ENCODE measurements at regions of chr3 and their contacts with region 1.

Region 1: GRCh38 chr3:133441867-133442270 is 42.0 kb downstream of the BFSP2 start:
- DNase-seq: peak in 8 of 14 experiments; percentile 3 to 51 (median 30)
- ATAC-seq: peak; percentile 70
- H3K4me3 ChIP-seq: peak overlapping the region; percentile 43
- H3K4me3 Mint-ChIP-seq: peak overlapping the region; percentile 85
- H3K27ac ChIP-seq: peak overlapping the region; percentile 56 to 58
- H3K27ac Mint-ChIP-seq: peak overlapping the region; percentile 83
- H3K4me1 ChIP-seq: peaks cover 19% of the 10 kb centered on the region
- H3K4me1 Mint-ChIP-seq: peaks cover 36% of the 10 kb centered on the region
- H3K27me3 ChIP-seq: no peaks in the 10 kb centered on the region
- H3K27me3 Mint-ChIP-seq: no peaks in the 10 kb centered on the region
- CTCF ChIP-seq: no peak

Region 2: GRCh38 chr3:133040696-133041523 is 401.0 kb before region 1 on chr3:
- CTCF ChIA-PET with region 1: no interaction called
- POLR2A ChIA-PET with region 1: no interaction called
- intact Hi-C with region 1: no loop called
- DNase-seq: peak in 1 of 14 experiments; percentile 2
- ATAC-seq: no peak
- H3K4me3 ChIP-seq: no peak overlapping the region
- H3K4me3 Mint-ChIP-seq: no peak overlapping the region
- H3K27ac ChIP-seq: no peak overlapping the region
- H3K27ac Mint-ChIP-seq: no peak overlapping the region
- H3K4me1 ChIP-seq: peaks cover 11% of the 10 kb centered on the region
- H3K4me1 Mint-ChIP-seq: peaks cover 15% of the 10 kb centered on the region
- H3K27me3 ChIP-seq: peaks cover 32 to 45% of the 10 kb centered on the region in 2 experiments
- H3K27me3 Mint-ChIP-seq: peaks cover 50% of the 10 kb centered on the region
- CTCF ChIP-seq: no peak

Region 3: DNA sequence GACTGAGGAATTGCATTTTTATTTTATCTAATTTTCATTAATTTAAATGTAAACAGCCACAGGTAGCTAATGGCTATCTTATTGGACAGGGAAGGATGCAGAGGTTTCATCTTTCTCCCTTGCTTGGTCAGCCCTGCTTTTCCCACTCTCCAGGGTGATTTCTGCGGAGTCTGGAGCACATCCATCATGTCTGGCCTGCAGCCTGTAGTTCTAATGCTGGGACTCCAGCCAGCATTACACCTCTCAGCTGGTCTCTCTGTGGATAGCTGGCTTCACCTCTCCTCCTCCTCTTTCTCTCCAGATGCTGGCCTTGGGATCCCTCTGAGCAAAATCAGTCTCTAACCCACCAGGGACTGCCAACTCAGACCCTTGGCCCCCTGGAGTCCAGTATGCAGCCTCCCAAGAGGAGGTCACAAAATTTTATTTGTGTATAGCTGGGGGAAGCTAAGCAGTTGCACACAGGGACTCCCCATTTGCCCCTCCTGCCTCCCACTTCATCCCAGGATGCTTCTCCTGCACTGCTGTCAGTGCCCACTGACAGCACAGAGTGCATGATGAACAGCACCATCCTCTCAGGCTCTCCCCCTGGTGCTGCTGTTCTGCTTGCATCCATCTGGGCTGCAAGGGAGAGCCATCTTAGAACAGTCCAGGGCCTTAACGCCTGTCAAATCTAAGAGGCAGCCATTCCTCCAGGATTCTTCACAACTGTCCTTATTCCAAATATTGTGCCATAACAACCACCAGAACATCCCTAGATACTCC is 40.3 kb before region 1 on chr3:
- CTCF ChIA-PET with region 1: no interaction called
- POLR2A ChIA-PET with region 1: no interaction called
- intact Hi-C with region 1: loop called in 1 of 2 experiments (anchors 1 kb)
- DNase-seq: peak in 1 of 14 experiments; percentile 16
- ATAC-seq: no peak
- H3K4me3 ChIP-seq: no peak overlapping the region
- H3K4me3 Mint-ChIP-seq: no peak overlapping the region
- H3K27ac ChIP-seq: no peak overlapping the region
- H3K27ac Mint-ChIP-seq: no peak overlapping the region
- H3K4me1 ChIP-seq: no peaks in the 10 kb centered on the region
- H3K4me1 Mint-ChIP-seq: no peaks in the 10 kb centered on the region
- H3K27me3 ChIP-seq: no peaks in the 10 kb centered on the region
- H3K27me3 Mint-ChIP-seq: peaks cover 2% of the 10 kb centered on the region
- CTCF ChIP-seq: no peak

Region 4: DNA sequence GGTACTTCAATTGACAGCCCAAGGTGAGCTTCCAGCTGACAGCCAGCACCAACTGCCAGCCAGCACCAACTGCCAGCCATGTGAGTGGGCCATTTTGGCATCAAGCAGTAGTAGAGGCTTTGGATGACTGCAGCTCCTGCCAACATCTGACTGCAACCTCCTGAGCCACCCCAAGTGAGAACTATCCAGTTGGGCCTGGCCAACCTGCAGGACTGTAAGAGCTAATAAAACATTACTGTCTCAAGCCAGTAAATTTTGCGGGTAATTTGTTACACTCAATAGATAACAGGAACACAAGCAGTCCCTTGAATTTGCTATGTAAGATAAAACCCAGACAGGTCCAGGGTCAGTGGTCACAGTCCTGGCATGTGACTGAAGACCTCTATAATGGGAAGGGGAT is 1382.9 kb after region 1 on chr3:
- CTCF ChIA-PET with region 1: no interaction called
- POLR2A ChIA-PET with region 1: no interaction called
- intact Hi-C with region 1: no loop called
- DNase-seq: no peak
- ATAC-seq: no peak
- H3K4me3 ChIP-seq: no peak overlapping the region
- H3K4me3 Mint-ChIP-seq: no peak overlapping the region
- H3K27ac ChIP-seq: no peak overlapping the region
- H3K27ac Mint-ChIP-seq: no peak overlapping the region
- H3K4me1 ChIP-seq: no peaks in the 10 kb centered on the region
- H3K4me1 Mint-ChIP-seq: no peaks in the 10 kb centered on the region
- H3K27me3 ChIP-seq: peaks cover 2 to 6% of the 10 kb centered on the region in 2 experiments
- H3K27me3 Mint-ChIP-seq: no peaks in the 10 kb centered on the region
- CTCF ChIP-seq: no peak

Measured in CD4-positive, alpha-beta T cell (primary cell).